Breast epithelium (tissue), 4 donors: ENCODE measurements at regions of chr12 and their contacts with region 1.

Region 1: GRCh38 chr12:51643951-51644350 is 52.9 kb downstream of the SCN8A start:
- DNase-seq: no peak
- H3K4me3 ChIP-seq: no peak overlapping the region
- H3K27ac ChIP-seq: no peak overlapping the region
- H3K4me1 ChIP-seq: no peaks in the 10 kb centered on the region
- H3K27me3 ChIP-seq: no peaks in the 10 kb centered on the region
- CTCF ChIP-seq: no peak
- POLR2A ChIP-seq: no peak

Region 2: GRCh38 chr12:50790081-50790480 is 853.9 kb before region 1 on chr12:
- intact Hi-C with region 1: loop called (anchors 5 kb)
- DNase-seq: no peak
- H3K4me3 ChIP-seq: no peak overlapping the region
- H3K27ac ChIP-seq: no peak overlapping the region
- H3K4me1 ChIP-seq: no peaks in the 10 kb centered on the region
- H3K27me3 ChIP-seq: no peaks in the 10 kb centered on the region
- CTCF ChIP-seq: no peak
- POLR2A ChIP-seq: no peak